K562 (cell line): ENCODE measurements at regions of chr1 and their contacts with region 1.

Region 1: DNA sequence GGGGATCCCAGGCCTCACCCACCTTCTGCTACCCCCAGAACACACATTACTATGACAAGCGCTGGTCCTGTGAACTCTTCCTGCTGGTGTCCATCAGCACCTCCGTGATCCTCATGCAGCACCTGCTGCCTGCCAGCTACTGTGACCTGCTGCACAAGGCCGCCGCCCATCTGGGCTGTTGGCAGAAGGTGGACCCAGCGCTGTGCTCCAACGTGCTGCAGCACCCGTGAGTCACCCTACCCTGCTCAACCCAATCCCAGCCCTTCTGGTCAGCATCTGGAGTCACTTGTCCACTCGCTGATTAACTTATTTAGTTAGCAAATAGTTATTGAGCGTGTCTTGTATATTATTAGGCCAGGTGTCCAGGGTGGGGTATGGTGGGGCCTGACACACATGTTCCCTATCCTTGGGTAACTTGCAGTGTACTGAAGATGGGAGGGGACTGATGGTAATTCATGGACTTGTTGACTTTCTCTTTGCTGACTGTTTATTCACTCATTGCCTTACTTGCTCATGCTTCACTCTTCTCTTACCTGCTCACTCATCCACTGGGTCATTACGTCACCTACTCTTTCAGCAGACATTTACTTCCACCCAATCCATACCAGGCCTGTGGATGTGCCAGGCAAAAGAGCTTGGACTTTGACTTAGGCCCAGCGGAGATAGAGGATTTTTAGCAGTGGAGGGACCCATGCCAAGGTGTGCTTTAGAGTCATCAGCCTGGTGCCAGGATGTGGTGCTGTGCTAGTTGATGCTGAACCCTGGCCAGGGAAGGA is 12.9 kb upstream of the KPNA6 start:
- DNase-seq: no peak
- ATAC-seq: no peak
- H3K4me3 ChIP-seq: no peak overlapping the region
- H3K27ac ChIP-seq: no peak overlapping the region
- H3K4me1 ChIP-seq: 0 out of 5 replicates have a peak, but pooled peaks cover 0 to 2% of the 10 kb centered on the region in 2 experiments
- H3K27me3 ChIP-seq: no peaks in the 10 kb centered on the region
- CTCF ChIP-seq: no peak
- EP300 ChIP-seq: no peak
- POLR2A ChIP-seq: no peak
- RAD21 ChIP-seq: no peak

Region 2: DNA sequence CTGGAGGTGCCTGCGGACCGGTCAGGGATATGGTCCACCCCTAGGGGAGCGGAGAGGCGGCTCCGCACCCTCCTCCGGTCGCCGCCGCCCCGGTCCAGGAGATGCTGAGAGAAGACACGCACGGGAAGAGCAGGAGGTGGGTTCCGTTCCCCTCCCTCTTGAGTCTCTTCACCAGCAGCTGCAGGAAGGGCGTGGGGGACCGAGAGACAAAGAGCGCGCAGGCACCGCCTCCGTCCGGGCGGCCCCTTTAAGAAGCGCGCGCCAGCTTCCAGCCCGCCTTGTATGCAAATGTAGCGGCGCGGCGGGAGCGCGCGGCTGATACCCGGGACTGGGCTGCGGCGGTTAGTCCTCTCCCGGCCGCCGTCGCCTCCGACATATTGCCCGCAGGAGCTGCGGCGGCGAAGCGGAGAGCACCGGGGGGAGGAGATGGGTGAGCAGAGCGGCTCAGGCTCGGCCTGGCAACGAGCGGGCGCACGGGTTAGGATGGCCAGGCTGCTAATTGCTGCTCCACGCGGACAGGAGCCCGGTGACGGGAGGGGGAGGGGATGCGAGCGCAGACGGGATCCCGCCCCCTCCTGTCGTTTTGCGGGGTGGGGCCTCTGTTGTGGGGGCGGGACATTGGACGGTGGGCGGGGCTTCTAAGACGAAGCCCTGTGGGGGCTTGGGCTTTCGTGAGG is 22.2 kb before region 1 on chr1 and contains the start of gene TMEM39B:
- CTCF ChIA-PET with region 1: no interaction called
- POLR2A ChIA-PET with region 1: interaction called, 11 read pairs
- in situ Hi-C with region 1: no loop called
- intact Hi-C with region 1: no loop called
- DNase-seq: peak; percentile 98 to 99 (median 99)
- ATAC-seq: peak; percentile 93
- H3K4me3 ChIP-seq: peak within 1 kb of the TSS; percentile 83
- H3K27ac ChIP-seq: peak within 1 kb of the TSS; percentile 79
- H3K4me1 ChIP-seq: peaks cover 17 to 20% of the 10 kb centered on the region in 2 experiments
- H3K27me3 ChIP-seq: no peaks in the 10 kb centered on the region
- CTCF ChIP-seq: 0 out of 6 replicates have a peak, but pooled peaks of 2 of the 3 experiments have one; percentile 1 to 9
- EP300 ChIP-seq: no peak; the same call in 1 of the 2 replicates
- POLR2A ChIP-seq: peak; percentile 98
- RAD21 ChIP-seq: no peak; a peak in 1 of 4 replicates
- polyA plus RNA-seq, gene TMEM39B: 0.92 to 3.5 TPM